Activated CD4-positive, alpha-beta T cell treated with anti-CD3 and anti-CD28 coated beads for 36 hours (primary cell): ENCODE measurements at regions of chr1 and their contacts with region 1.

Region 1: GRCh38 chr1:178725603-178726517 is 816 bp downstream of the RALGPS2 start:
- DNase-seq: peak; percentile 73
- ATAC-seq: peak; percentile 73
- H3K4me3 Mint-ChIP-seq: peak overlapping the region; percentile 79
- H3K27ac Mint-ChIP-seq: peak overlapping the region; percentile 64
- H3K4me1 Mint-ChIP-seq: peaks cover 20% of the 10 kb centered on the region
- H3K27me3 Mint-ChIP-seq: no peaks in the 10 kb centered on the region

Region 2: GRCh38 chr1:178542560-178543356 is 183.1 kb before region 1 on chr1:
- CTCF ChIA-PET with region 1: interaction called, 3 read pairs
- POLR2A ChIA-PET with region 1: no interaction called
- intact Hi-C with region 1: loop called in 1 of 2 experiments (anchors 1 kb)
- DNase-seq: peak; percentile 93
- ATAC-seq: peak; percentile 88
- H3K4me3 Mint-ChIP-seq: peak overlapping the region; percentile 84
- H3K27ac Mint-ChIP-seq: peak overlapping the region; percentile 85
- H3K4me1 Mint-ChIP-seq: peaks cover 2% of the 10 kb centered on the region
- H3K27me3 Mint-ChIP-seq: no peaks in the 10 kb centered on the region

Region 3: GRCh38 chr1:178746345-178746744 is 20.5 kb after region 1 on chr1:
- CTCF ChIA-PET with region 1: no interaction called
- POLR2A ChIA-PET with region 1: no interaction called
- intact Hi-C with region 1: loop called in 1 of 2 experiments (anchors 1 kb)
- DNase-seq: no peak
- ATAC-seq: no peak
- H3K4me3 Mint-ChIP-seq: no peak overlapping the region
- H3K27ac Mint-ChIP-seq: no peak overlapping the region
- H3K4me1 Mint-ChIP-seq: no peaks in the 10 kb centered on the region
- H3K27me3 Mint-ChIP-seq: no peaks in the 10 kb centered on the region

Region 4: DNA sequence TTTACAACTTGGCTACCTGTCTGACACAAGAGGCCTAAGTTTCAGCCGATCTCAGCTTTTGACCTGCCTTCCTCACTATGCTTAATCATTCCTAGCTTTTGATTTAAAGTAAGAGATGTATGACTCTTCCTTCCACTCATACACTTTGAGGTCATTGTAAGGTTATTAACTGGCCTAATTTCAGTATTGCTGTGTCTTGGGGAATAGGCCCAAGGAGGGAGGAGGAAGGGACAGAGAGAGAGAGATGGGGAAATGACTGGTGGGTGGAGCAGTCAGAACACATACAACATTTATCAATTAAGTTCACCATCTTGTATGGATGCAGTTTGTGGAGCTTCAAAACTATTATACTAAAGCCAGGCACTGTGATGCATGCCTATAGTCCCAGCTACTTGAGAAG is 271.6 kb after region 1 on chr1:
- CTCF ChIA-PET with region 1: no interaction called
- POLR2A ChIA-PET with region 1: no interaction called
- intact Hi-C with region 1: no loop called
- DNase-seq: no peak
- ATAC-seq: peak; percentile 19
- H3K4me3 Mint-ChIP-seq: no peak overlapping the region
- H3K27ac Mint-ChIP-seq: no peak overlapping the region
- H3K4me1 Mint-ChIP-seq: no peaks in the 10 kb centered on the region
- H3K27me3 Mint-ChIP-seq: no peaks in the 10 kb centered on the region

Region 5: DNA sequence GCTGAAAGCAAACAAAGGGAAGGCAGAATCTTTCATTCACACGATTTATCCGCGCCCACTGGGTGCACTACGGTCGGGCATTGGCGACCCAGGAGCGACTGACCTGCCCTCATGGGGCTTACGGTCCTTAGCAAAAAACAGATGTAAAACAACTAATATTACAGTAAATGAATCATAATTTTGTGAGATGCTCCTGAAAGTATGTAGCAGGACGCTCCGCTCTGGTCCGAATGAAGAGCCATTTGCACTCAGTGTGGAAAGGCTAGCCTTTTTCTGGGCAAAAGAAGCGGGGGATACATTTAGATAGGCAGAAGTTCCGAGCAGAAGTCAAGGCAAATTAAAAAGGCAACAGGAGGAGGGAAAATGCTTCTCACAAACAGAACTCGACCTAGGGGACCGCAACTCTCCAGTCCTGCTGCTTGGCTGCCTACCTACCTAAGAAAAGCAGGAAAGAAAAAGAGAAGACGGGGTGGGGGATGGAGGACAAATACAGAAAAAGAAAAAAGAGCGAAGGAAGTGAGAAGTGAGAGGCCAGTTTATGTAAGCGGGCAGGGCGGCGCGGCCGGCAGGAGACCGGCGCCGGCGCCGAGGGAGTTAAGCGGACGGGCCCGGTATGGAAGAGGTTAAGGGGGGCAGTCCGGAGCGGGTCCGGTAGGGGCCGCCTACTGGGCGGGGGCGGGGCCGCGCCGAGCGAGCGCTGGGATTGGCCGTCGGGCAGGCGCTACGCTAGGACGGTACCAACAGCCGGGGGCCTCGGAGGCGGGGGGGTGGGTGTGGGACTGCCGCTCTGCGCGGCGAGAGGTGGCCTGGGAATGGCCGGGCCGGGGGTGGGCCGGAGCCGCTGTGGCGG is 299.5 kb after region 1 on chr1 and contains the start of gene FAM20B:
- CTCF ChIA-PET with region 1: no interaction called
- POLR2A ChIA-PET with region 1: no interaction called
- intact Hi-C with region 1: loop called in 1 of 2 experiments (anchors 5 kb)
- DNase-seq: peak; percentile 93
- ATAC-seq: peak; percentile 85
- H3K4me3 Mint-ChIP-seq: peak within 1 kb of the TSS; percentile 87
- H3K27ac Mint-ChIP-seq: peak within 1 kb of the TSS; percentile 87
- H3K4me1 Mint-ChIP-seq: peaks cover 39% of the 10 kb centered on the region
- H3K27me3 Mint-ChIP-seq: no peaks in the 10 kb centered on the region
- total RNA-seq, gene FAM20B: 21.7 to 35.8 TPM

Region 6: GRCh38 chr1:179129702-179130473 is 404.0 kb after region 1 on chr1:
- CTCF ChIA-PET with region 1: no interaction called
- POLR2A ChIA-PET with region 1: no interaction called
- intact Hi-C with region 1: loop called in 1 of 2 experiments (anchors 5 kb)
- DNase-seq: peak; percentile 31
- ATAC-seq: peak; percentile 97
- H3K4me3 Mint-ChIP-seq: peak overlapping the region; percentile 61
- H3K27ac Mint-ChIP-seq: peak overlapping the region; percentile 92
- H3K4me1 Mint-ChIP-seq: peaks cover 39% of the 10 kb centered on the region
- H3K27me3 Mint-ChIP-seq: no peaks in the 10 kb centered on the region

Region 7: DNA sequence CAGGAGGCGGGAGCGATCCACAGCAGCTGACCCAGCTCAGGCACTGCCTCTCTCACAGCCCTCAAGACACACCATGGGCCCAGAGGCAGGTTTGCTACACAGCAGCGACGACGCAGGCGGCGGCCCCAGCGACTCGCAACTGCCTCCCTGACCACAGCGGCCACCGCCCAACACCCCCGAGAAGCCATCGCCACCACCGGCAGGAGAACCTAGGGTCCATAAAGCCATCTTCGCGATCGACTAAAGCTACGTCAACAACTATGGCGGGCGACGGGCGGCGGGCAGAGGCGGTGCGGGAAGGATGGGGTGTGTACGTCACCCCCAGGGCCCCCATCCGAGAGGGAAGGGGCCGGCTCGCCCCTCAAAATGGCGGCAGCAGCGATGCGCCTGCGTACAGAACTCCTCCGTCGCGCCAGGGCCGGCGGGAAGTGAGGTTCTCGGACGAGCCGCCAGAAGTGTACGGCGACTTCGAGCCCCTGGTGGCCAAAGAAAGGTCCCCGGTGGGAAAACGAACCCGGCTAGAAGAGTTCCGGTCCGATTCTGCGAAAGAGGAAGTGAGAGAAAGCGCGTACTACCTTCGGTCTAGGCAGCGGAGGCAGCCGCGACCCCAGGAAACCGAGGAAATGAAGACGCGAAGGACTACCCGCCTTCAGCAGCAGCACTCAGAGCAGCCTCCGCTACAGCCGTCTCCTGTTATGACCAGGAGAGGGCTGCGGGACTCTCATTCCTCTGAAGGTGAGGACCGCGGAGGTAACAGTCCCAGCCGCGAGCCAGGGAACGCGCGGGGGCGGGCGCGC is 1156.6 kb after region 1 on chr1 and contains the start of gene TOR1AIP1:
- CTCF ChIA-PET with region 1: no interaction called
- POLR2A ChIA-PET with region 1: no interaction called
- intact Hi-C with region 1: loop called in 1 of 2 experiments (anchors 5 kb)
- DNase-seq: peak; percentile 98
- ATAC-seq: peak; percentile 80
- H3K4me3 Mint-ChIP-seq: peak within 1 kb of the TSS; percentile 87
- H3K27ac Mint-ChIP-seq: peak within 1 kb of the TSS; percentile 98
- H3K4me1 Mint-ChIP-seq: peaks cover 59% of the 10 kb centered on the region
- H3K27me3 Mint-ChIP-seq: no peaks in the 10 kb centered on the region
- total RNA-seq, gene TOR1AIP1: 50.1 to 71.6 TPM

Region 8: DNA sequence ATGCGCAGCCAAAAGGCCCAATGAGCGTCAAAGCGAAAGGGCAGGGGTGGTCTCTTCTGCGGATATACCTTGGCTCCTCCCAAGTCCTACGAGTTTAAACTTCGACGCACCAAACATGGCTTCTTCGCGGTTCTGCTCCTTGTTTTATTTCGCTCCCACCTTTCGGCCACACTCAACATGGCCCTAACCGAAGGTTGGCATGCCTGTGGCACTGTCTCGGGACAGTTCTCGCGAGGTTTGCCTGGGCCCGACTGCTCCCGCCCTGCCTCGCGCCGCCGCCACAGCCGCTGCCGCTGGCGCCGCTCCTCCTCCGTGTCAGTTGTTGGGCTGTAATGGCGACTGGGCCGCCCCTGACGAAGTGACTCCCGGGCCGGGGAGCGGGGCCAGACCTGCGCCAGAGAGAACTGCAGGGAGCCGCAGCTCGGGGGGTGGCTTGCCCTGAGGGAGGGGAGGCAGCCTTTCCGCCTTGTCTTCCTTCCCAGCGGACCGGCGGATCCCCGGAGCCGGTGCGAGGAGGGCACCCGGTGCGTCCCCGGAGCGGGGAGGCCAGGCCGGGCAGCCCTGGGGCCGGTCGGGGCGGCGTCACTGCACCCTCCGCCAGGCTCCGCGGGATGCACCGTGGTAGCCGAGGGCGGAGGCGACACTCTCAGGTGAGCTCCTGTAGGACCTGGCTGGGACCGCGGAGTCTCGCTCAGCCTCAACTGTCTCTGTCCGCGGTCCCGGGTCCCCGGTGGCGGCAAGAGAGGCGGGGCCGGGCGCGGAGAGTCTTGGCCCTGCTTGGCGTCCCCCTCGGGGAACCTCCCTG is 1228.8 kb after region 1 on chr1 and contains the start of gene CEP350:
- CTCF ChIA-PET with region 1: no interaction called
- POLR2A ChIA-PET with region 1: no interaction called
- intact Hi-C with region 1: loop called in 1 of 2 experiments (anchors 5 kb)
- DNase-seq: peak; percentile 99
- ATAC-seq: peak; percentile 94
- H3K4me3 Mint-ChIP-seq: peak within 1 kb of the TSS; percentile 82
- H3K27ac Mint-ChIP-seq: peak within 1 kb of the TSS; percentile 98
- H3K4me1 Mint-ChIP-seq: peaks cover 47% of the 10 kb centered on the region
- H3K27me3 Mint-ChIP-seq: no peaks in the 10 kb centered on the region
- total RNA-seq, gene CEP350: 38.2 to 42.1 TPM